T-cell (primary cell): ENCODE measurements at regions of chr3 and their contacts with region 1.

Region 1: GRCh38 chr3:42904076-42904475 is 1.9 kb upstream of the ZNF662 start:
- DNase-seq: no peak
- ATAC-seq: no peak
- H3K4me3 ChIP-seq: no peak overlapping the region
- H3K4me3 Mint-ChIP-seq: no peak overlapping the region
- H3K27ac ChIP-seq: no peak overlapping the region
- H3K27ac Mint-ChIP-seq: no peak overlapping the region
- H3K4me1 ChIP-seq: peaks cover 0 to 14% of the 10 kb centered on the region in 2 experiments
- H3K4me1 Mint-ChIP-seq: peaks cover 13 to 19% (median 15%) of the 10 kb centered on the region in 3 donors
- H3K27me3 ChIP-seq: peaks cover 0 to 27% of the 10 kb centered on the region in 2 experiments
- H3K27me3 Mint-ChIP-seq: peaks cover 32 to 44% of the 10 kb centered on the region in 2 donors

Region 2: GRCh38 chr3:42839616-42840015 is 64.5 kb before region 1 on chr3:
- CTCF ChIA-PET with region 1: no interaction called
- POLR2A ChIA-PET with region 1: no interaction called
- DNase-seq: peak in 22 of 35 experiments; percentile 1 to 68 (median 18)
- ATAC-seq: peak; percentile 84 to 96 (median 88)
- H3K4me3 ChIP-seq: no peak overlapping the region
- H3K4me3 Mint-ChIP-seq: no peak overlapping the region
- H3K27ac ChIP-seq: no peak overlapping the region
- H3K27ac Mint-ChIP-seq: no peak overlapping the region
- H3K4me1 ChIP-seq: no peaks in the 10 kb centered on the region
- H3K4me1 Mint-ChIP-seq: peaks cover 0 to 4% (median 2%) of the 10 kb centered on the region in 3 donors
- H3K27me3 ChIP-seq: peaks cover 0 to 3% of the 10 kb centered on the region in 2 experiments
- H3K27me3 Mint-ChIP-seq: peaks cover 0 to 5% of the 10 kb centered on the region in 2 donors

Region 3: DNA sequence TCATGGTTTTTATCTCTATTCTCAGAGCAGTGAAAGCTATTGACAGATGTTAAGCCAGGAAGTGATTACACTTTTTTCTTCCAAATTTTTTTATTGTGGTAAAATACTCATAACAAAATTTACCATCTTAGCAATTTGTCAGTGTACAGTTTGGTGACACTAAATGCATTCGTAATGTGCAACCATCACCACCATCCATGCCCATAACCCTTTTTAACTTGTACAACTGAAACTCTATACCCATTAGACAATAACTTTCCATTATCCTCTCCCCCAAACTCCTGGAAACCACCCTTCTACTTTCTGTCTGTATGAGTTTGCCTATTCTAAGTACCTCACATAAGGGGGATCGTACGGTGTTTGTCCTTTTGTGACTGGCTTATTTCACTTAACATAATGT is 216.9 kb after region 1 on chr3:
- CTCF ChIA-PET with region 1: no interaction called
- POLR2A ChIA-PET with region 1: interaction called in 1 of 2 experiments, 12 read pairs
- DNase-seq: no peak
- ATAC-seq: no peak
- H3K4me3 ChIP-seq: no peak overlapping the region
- H3K4me3 Mint-ChIP-seq: no peak overlapping the region
- H3K27ac ChIP-seq: no peak overlapping the region
- H3K27ac Mint-ChIP-seq: no peak overlapping the region
- H3K4me1 ChIP-seq: no peaks in the 10 kb centered on the region
- H3K4me1 Mint-ChIP-seq: peaks cover 0 to 8% (median 0%) of the 10 kb centered on the region in 3 donors
- H3K27me3 ChIP-seq: no peaks in the 10 kb centered on the region
- H3K27me3 Mint-ChIP-seq: peaks cover 18% of the 10 kb centered on the region in 2 donors